OCI-LY7 (cell line): ENCODE measurements at regions of chr22 and their contacts with region 1.

Region 1: DNA sequence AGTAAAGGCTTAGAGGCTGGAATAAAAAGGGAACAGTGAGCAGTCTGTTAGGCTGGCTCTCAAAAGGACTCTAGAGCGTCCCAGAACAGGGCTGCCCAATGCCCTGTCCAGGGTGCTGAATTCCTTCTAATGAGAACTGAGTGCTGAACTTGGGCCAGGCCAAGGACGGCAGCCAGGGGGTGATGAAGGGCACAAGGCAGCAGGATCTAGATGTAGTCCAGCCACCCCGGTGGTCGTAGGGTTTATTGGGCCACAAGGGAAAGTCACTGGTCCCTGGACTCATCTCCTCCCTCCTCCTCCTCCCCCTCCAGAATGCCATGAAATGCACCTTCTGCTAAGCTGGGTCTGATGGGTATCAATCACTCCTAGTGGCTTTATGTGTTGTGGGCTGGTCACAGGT is 19.2 kb downstream of the NPTXR start:
- DNase-seq: peak; percentile 61
- H3K4me3 ChIP-seq: no peak overlapping the region
- H3K27ac ChIP-seq: no peak overlapping the region
- H3K4me1 ChIP-seq: no peaks in the 10 kb centered on the region
- CTCF ChIP-seq: 0 out of 2 replicates have a peak, but pooled peaks have one; percentile 29

Region 2: GRCh38 chr22:38549086-38549485 is 275.5 kb before region 1 on chr22:
- CTCF ChIA-PET with region 1: no interaction called
- POLR2A ChIA-PET with region 1: no interaction called
- intact Hi-C with region 1: no loop called
- DNase-seq: no peak
- H3K4me3 ChIP-seq: no peak overlapping the region
- H3K27ac ChIP-seq: peak overlapping the region; percentile 16
- H3K4me1 ChIP-seq: peaks cover 13% of the 10 kb centered on the region
- CTCF ChIP-seq: no peak

Region 3: DNA sequence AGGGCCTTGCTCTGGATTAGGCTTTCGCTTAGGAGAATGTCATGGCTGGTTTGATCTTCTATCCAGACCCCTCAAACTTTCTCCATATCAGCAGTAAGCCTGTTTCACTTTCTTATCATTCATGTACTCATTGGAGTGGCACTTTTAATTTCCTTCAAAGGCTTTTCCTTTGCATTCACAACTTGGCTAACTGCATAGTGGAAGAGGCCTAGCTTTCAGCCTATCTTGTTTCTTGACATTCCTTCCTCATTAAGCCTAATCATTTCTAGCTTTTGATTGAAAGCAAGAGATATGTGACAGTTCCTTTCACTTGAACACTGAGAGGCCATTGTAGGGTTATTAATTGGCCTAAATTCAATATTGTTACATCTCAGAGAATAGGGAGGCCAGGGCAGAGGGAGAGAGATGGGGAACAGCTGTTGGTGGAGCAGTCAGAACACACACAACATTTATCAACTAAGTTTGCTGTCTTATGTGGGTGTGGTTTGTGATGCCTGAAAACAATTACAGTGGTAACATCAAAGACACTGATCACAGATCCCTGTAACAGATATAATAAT is 95.1 kb after region 1 on chr22:
- CTCF ChIA-PET with region 1: no interaction called
- POLR2A ChIA-PET with region 1: no interaction called
- intact Hi-C with region 1: loop called (anchors 10 kb)
- DNase-seq: no peak
- H3K4me3 ChIP-seq: no peak overlapping the region
- H3K27ac ChIP-seq: no peak overlapping the region
- H3K4me1 ChIP-seq: no peaks in the 10 kb centered on the region
- CTCF ChIP-seq: no peak

Region 4: DNA sequence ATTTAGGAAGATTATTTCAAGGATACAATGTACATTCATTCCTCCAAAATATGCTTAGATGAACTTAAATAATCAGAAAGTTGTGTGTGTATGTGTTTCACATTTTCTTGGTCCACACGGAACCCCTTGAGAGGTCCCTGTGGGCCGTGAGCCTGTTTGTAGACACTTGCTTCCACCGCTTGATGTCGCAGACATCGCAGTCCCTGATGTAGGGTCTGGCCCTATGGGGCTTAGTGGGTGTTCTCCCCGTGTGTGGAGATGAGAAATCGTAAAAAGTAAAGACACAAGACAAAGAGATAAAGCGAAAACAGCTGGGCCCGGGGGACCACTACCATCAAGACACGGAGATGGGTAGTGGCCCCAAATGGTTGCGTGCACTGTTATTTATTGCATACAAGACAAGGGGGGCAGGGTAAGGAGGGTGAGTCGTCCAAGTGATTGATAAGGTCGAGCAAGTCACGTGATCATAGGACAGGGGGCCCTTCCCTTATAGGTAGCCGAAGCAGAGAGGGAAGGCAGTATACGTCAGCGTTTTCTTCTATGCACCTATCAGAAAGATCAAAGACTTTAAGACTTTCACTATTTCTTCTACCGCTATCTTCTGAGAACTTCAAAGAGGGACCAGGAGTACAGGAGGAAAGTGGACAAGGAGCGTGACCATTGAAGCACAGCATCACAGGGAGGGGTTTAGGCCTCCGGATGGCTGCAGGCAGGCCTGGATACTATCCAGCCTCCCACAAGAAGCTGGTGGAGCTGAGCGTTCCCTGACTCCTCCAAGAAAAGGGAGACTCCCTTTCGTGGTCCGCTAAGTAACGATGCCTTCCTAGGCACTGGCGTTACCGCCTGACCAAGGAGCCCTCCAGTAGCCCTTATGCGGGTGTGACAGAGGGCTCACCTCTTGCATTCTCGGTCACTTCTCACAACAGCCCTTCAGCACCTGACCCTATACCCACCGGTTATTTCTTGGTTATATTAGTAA is 188.2 kb after region 1 on chr22:
- CTCF ChIA-PET with region 1: no interaction called
- POLR2A ChIA-PET with region 1: no interaction called
- intact Hi-C with region 1: no loop called
- DNase-seq: no peak
- H3K4me3 ChIP-seq: no peak overlapping the region
- H3K27ac ChIP-seq: no peak overlapping the region
- H3K4me1 ChIP-seq: peaks cover 34% of the 10 kb centered on the region
- CTCF ChIP-seq: no peak